ENCODE measurements at regions of chr3 and their contacts with region 1.

Region 1: DNA sequence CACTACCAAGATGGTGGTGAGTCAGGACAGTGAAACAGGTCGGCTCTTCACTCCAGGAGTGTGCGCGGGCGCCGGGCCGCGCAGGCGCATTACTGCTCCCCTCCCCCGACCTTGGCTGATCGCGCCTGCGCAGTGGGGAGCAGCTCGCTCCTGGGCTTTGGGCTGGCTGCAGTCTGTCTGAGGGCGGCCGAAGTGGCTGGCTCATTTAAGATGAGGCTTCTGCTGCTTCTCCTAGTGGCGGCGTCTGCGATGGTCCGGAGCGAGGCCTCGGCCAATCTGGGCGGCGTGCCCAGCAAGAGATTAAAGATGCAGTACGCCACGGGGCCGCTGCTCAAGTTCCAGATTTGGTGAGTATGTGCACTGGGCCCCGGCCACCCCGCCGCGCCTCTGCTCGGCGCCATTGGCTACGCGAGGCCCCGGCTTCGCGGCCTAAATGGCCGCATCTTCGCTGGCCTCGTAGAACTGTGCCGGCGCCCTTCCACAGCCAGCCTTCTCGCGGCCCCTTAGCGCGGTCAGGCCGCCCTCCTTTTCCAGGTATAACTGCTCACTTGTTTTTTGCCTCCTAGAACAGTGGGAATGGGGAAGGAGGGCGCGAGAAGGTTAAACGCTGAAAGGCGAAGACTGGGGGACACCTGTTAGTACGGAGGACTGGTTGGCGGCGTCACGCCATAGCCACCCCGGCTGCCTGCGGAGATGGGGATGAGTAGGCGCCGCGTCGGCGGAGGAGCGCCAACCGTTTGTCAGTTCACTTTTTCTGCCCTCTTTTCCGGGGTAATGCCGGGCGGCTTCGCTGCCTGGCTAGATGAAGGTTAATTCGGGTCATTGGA is at the start of gene SELENOT:
- DNase-seq: peak; percentile 95 to 97 (median 97)
- H3K4me3 ChIP-seq: peak within 1 kb of the TSS; percentile 59 to 86 (median 71)
- H3K4me3 Mint-ChIP-seq: peak within 1 kb of the TSS; percentile 99
- H3K27ac ChIP-seq: peak within 1 kb of the TSS; percentile 93 to 96
- H3K27ac Mint-ChIP-seq: peak within 1 kb of the TSS; percentile 98 to 100 (median 99)
- H3K4me1 ChIP-seq: peaks cover 31 to 48% of the 10 kb centered on the region in 2 donors
- H3K4me1 Mint-ChIP-seq: peaks cover 48% of the 10 kb centered on the region
- H3K27me3 ChIP-seq: no peaks in the 10 kb centered on the region
- H3K27me3 Mint-ChIP-seq: peaks cover 0 to 4% (median 0%) of the 10 kb centered on the region in 3 donors
- CTCF ChIP-seq: peak; percentile 10
- polyA plus RNA-seq, gene SELENOT: 210 to 549 (median 492) TPM

Region 2: DNA sequence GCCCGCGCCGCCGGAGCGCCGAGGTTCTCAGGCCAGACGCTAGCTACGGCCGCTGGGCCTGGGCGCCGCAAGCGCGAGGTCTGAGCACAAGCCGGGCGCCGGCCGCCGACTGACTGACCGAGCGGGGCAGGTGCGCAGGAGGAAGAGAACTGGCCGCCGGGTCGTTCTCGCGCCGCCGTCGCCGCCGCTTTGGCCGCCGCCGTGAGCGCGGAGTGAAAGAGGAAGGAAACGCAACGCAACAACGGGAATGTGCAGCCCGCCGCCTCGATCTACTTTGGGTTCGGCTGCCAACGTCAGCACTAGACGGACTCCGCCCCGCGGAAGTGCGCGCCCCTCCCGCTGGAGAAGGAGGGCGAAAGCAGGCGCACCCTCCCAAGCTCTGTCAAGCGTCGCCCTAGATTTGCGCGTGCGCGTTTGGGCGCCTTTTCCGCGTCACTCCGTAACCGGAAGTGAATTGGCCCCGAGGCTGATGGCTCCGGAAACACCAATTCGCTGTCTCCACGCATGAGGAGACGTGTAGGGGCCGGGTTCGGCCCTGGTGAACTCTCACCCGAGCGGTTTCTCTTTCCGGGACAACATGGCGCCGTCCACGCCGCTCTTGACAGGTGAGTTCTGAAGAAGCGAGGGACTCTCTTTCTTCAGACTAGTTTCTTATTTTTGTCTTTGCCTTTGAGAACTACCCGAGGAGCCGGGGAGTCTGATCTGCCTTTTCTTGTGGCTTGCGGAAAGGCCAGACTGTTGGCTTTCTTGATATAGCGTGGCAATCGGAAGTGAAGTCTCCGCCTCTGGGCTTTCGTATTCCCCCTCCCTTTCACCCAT is 56.9 kb before region 1 on chr3 and contains the starts of genes EIF2A and SERP1:
- intact Hi-C with region 1: loop called (anchors 2 to 5 kb)
- DNase-seq: peak; percentile 100
- H3K4me3 ChIP-seq: peak within 1 kb of the TSS; percentile 96 to 98 (median 97)
- H3K4me3 Mint-ChIP-seq: peak within 1 kb of the TSS; percentile 99
- H3K27ac ChIP-seq: peak within 1 kb of the TSS; percentile 93 to 99
- H3K27ac Mint-ChIP-seq: peak within 1 kb of the TSS; percentile 96 to 100 (median 99)
- H3K4me1 ChIP-seq: peaks cover 34 to 55% of the 10 kb centered on the region in 2 donors
- H3K4me1 Mint-ChIP-seq: peaks cover 51% of the 10 kb centered on the region
- H3K27me3 ChIP-seq: no peaks in the 10 kb centered on the region
- H3K27me3 Mint-ChIP-seq: peaks cover 0 to 3% (median 0%) of the 10 kb centered on the region in 3 donors
- CTCF ChIP-seq: no peak
- polyA plus RNA-seq, gene EIF2A: 48.5 to 88.7 (median 50.8) TPM
- polyA plus RNA-seq, gene SERP1: 178 to 226 (median 220) TPM

Region 3: DNA sequence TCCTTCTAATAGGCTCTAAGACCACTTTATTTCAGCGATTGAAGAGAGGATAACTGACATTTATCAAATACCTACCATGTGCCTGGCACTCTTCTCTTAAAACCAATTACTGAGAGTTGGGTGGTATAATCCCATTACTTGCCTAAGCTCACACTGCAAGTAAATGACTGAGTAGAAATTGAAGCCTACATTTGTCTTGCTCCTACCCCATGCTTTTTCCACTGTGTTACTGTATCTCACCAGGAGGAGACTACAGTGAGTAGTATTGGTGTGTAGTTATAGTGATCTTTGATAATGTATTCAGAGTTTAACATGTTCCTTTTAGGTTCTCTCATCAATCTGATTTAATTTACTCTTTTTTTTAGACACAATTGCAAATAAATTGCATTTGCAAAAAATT is 36.0 kb before region 1 on chr3:
- intact Hi-C with region 1: no loop called
- DNase-seq: no peak
- H3K4me3 ChIP-seq: no peak overlapping the region
- H3K4me3 Mint-ChIP-seq: no peak overlapping the region
- H3K27ac ChIP-seq: no peak overlapping the region
- H3K27ac Mint-ChIP-seq: peak overlapping the region in 1 of 7 donors; percentile 1
- H3K4me1 ChIP-seq: no peaks in the 10 kb centered on the region
- H3K4me1 Mint-ChIP-seq: no peaks in the 10 kb centered on the region
- H3K27me3 ChIP-seq: no peaks in the 10 kb centered on the region
- H3K27me3 Mint-ChIP-seq: no peaks in the 10 kb centered on the region
- CTCF ChIP-seq: no peak

Region 4: DNA sequence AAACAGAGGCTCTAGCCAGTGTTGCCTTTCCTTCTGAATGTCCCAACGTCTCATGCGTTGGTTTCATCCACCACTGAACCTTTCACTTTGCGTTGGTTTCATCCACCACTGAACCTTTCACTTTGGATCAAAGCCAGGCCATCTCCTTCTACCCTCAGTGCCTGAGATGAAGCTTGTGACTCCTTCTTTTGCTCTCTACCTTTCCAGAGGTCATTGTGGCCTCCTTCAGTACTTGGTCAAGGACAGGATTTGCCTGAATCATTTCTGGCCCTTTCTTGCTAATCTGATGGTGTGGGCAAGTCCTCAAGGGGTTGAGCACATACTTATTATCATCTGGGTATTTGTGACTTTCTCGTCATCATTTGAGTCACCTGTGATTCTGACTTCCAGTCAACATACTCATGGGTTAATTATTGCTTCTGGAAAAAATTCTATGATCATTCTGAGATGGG is 49.8 kb after region 1 on chr3:
- intact Hi-C with region 1: no loop called
- DNase-seq: no peak
- H3K4me3 ChIP-seq: no peak overlapping the region
- H3K4me3 Mint-ChIP-seq: no peak overlapping the region
- H3K27ac ChIP-seq: no peak overlapping the region
- H3K27ac Mint-ChIP-seq: no peak overlapping the region
- H3K4me1 ChIP-seq: peaks cover 7 to 11% of the 10 kb centered on the region in 2 donors
- H3K4me1 Mint-ChIP-seq: peaks cover 8% of the 10 kb centered on the region
- H3K27me3 ChIP-seq: no peaks in the 10 kb centered on the region
- H3K27me3 Mint-ChIP-seq: peaks cover 0 to 2% (median 1%) of the 10 kb centered on the region in 3 donors
- CTCF ChIP-seq: no peak

Region 5: DNA sequence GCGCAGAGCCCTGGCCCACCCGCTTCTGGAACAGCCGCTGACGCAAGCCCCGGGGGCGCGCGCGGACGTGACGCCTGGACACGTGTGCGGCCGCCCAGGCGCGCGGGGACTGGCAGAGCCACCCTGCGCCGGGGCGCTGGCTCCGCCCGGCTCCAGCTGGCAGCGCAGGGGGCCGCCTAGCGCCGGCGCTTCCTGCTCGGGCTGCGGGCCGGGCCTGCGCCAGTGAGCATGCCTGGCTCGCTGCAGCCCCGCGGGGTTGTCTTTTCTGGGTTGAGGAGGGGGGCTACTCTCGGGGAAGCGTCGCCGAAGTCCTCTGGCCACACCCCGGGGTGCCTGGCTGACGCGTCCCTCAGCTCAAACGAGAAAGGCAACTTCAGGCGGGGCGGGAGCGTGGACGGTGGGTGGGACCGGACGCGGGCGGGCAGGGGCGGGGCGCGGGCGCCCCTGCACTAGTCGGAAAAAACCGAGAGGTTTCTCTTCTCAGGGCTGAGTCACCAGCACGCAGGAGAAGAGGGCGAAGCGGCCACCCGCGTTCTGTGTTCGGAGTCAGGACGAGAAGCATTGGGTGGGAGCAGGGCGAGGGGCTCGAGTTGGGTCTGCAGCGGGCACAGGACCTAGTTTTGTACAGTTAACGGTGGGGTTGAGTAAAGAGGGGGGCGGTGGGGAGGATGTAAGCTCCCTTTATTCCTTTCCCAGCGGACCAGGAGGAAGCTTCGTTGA is 159.9 kb after region 1 on chr3 and contains the start of gene SIAH2:
- intact Hi-C with region 1: loop called (anchors 10 kb)
- DNase-seq: peak; percentile 91 to 93 (median 92)
- H3K4me3 ChIP-seq: peak within 1 kb of the TSS; percentile 82 to 86 (median 84)
- H3K4me3 Mint-ChIP-seq: peak within 1 kb of the TSS; percentile 97
- H3K27ac ChIP-seq: peak within 1 kb of the TSS; percentile 100
- H3K27ac Mint-ChIP-seq: peak within 1 kb of the TSS; percentile 100
- H3K4me1 ChIP-seq: peaks cover 36 to 41% of the 10 kb centered on the region in 2 donors
- H3K4me1 Mint-ChIP-seq: peaks cover 39% of the 10 kb centered on the region
- H3K27me3 ChIP-seq: no peaks in the 10 kb centered on the region
- H3K27me3 Mint-ChIP-seq: peaks cover 0 to 3% (median 0%) of the 10 kb centered on the region in 3 donors
- CTCF ChIP-seq: no peak
- polyA plus RNA-seq, gene SIAH2: 24.6 to 43.5 (median 28.2) TPM

Measured in CD14-positive monocyte (primary cell).